ENCODE measurements at regions of chr22 and their contacts with region 1.

Region 1: DNA sequence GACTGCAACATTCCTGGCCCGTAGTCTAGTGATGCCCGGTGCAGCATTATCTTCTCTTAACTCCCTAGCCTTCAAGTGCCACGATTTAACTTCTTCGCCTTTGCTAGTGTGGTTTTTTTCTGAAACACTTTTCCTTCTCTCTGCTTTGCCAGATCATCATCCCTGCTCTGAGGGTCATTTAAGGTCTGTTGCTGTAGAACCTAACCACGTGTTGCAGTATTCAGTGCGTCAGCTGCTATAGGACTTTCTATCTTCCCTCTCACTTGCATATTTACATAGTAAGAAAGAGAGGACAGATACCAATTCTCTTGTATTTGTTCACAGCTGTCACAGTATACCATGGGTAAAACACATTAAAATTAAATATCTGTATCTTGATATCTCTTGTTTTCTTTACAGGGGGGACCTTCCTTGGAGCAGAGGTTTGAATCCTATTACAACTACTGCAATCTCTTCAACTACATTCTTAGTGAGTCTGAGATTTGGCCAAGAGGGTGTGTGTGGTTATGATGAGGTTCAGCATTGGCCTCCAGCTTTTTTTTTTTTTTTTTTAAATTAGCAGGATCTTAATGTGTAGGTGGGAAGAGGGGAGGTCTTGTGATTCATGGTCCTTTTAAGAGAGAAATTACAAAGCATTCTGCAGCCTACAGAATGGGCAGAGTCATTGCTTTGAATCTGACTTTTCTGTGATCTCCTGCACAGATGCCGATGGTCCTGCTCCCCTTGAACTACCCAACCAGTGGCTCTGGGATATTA is 13.5 kb downstream of the EIF3L start:
- DNase-seq: no peak
- ATAC-seq: no peak
- H3K4me3 ChIP-seq: no peak overlapping the region
- H3K4me3 Mint-ChIP-seq: no peak overlapping the region
- H3K27ac ChIP-seq: no peak overlapping the region
- H3K27ac Mint-ChIP-seq: no peak overlapping the region
- H3K4me1 ChIP-seq: no peaks in the 10 kb centered on the region
- H3K4me1 Mint-ChIP-seq: peaks cover 4% of the 10 kb centered on the region
- H3K27me3 ChIP-seq: no peaks in the 10 kb centered on the region
- H3K27me3 Mint-ChIP-seq: no peaks in the 10 kb centered on the region
- CTCF ChIP-seq: no peak

Region 2: DNA sequence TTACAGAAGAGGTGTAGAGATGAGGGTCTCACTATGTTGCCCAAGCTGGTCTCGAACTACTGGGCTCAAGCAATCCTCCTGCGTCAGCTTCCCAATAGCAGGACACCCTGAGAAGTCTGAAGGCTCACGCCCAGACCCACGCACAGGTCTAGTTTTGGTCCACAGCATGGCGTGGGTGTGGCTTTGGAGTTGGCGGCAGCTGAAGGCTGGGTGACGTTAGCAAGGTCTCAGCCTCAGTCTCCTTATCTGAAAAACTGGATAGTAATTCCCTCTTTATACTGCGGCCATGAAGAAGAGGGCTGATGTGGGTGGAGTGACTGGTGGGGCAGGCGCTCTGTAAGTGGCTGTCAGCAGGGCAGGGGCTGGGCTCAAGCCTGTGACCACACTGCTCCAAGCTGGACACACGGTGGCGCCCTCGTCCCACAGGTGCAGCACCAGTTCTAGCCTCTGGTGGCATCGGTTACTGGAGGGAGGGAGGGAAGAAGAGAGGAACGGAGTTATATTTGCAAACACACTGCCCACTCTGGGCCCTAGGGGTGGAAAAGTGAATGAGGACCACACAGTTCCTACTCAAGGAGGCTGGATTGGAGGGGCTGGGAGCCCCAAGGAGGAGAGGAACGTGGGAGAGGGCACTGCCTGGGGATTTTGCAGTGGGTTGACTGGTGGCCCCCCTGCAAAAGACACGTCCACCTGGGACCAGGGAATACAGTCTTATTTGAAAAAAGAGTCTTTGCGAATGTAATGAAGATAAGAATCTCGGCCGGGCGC is 324.0 kb before region 1 on chr22:
- CTCF ChIA-PET with region 1: interaction called, 5 read pairs
- POLR2A ChIA-PET with region 1: no interaction called
- intact Hi-C with region 1: loop called (anchors 5 kb)
- DNase-seq: peak; percentile 80 to 93 (median 89)
- ATAC-seq: peak; percentile 99
- H3K4me3 ChIP-seq: no peak overlapping the region
- H3K4me3 Mint-ChIP-seq: peak overlapping the region; percentile 56
- H3K27ac ChIP-seq: no peak overlapping the region
- H3K27ac Mint-ChIP-seq: no peak overlapping the region
- H3K4me1 ChIP-seq: peaks cover 16% of the 10 kb centered on the region
- H3K4me1 Mint-ChIP-seq: peaks cover 17% of the 10 kb centered on the region
- H3K27me3 ChIP-seq: peaks cover 0 to 8% of the 10 kb centered on the region in 2 experiments
- H3K27me3 Mint-ChIP-seq: peaks cover 30% of the 10 kb centered on the region
- CTCF ChIP-seq: peak; percentile 89

Region 3: GRCh38 chr22:37566903-37567820 is 295.6 kb before region 1 on chr22:
- CTCF ChIA-PET with region 1: no interaction called
- POLR2A ChIA-PET with region 1: no interaction called
- intact Hi-C with region 1: no loop called
- DNase-seq: peak; percentile 77 to 97 (median 92)
- ATAC-seq: peak; percentile 85
- H3K4me3 ChIP-seq: peak overlapping the region; percentile 9 to 10
- H3K4me3 Mint-ChIP-seq: peak overlapping the region; percentile 75
- H3K27ac ChIP-seq: no peak overlapping the region
- H3K27ac Mint-ChIP-seq: peak overlapping the region; percentile 66
- H3K4me1 ChIP-seq: peaks cover 24% of the 10 kb centered on the region
- H3K4me1 Mint-ChIP-seq: peaks cover 24% of the 10 kb centered on the region
- H3K27me3 ChIP-seq: peaks cover under 1 to 9% of the 10 kb centered on the region in 2 experiments
- H3K27me3 Mint-ChIP-seq: peaks cover 15% of the 10 kb centered on the region
- CTCF ChIP-seq: peak; percentile 93

Region 4: DNA sequence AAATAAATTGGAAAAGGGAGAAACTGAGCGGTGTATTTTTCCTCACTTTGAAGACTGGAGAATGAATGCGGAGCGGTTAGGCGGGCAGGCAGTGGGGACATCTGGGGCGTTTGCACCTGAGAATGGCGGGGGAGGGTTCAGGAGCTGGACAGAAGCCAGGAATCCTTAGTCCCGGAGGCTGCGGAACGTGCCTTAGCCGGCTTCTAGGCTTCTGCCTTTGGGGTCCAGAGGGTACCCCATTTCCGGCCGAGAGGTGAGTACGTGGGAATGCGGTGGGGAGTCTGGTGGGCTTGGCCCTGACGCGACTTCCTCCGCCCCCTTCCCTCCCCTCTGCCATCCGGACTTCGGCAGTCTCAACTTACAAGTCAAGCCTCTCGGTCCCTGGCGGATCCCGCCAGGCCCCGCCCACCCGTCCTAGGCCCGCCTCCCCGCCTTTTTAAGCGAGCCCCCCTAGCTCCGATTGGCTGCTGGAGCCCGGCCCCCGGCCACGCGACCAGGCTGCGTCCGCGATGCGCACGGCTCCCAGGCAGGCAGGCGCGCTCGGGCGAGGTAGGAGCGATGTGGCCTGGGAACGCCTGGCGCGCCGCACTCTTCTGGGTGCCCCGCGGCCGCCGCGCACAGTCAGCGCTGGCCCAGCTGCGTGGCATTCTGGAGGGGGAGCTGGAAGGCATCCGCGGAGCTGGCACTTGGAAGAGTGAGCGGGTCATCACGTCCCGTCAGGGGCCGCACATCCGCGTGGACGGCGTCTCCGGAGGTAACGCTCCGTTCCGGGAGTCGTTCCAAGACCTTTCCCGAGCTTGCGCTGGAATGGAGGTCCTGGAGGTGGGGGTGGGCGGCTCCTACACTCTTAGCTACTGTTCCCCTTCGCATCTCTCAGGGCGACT is 55.1 kb before region 1 on chr22 and contains the start of gene GCAT:
- CTCF ChIA-PET with region 1: interaction called, 16 read pairs
- POLR2A ChIA-PET with region 1: no interaction called
- intact Hi-C with region 1: no loop called
- DNase-seq: peak; percentile 63 to 92 (median 83)
- ATAC-seq: peak; percentile 91
- H3K4me3 ChIP-seq: peak within 1 kb of the TSS; percentile 51 to 55
- H3K4me3 Mint-ChIP-seq: peak within 1 kb of the TSS; percentile 75
- H3K27ac ChIP-seq: no peak within 1 kb of the TSS
- H3K27ac Mint-ChIP-seq: no peak within 1 kb of the TSS
- H3K4me1 ChIP-seq: peaks cover 37% of the 10 kb centered on the region
- H3K4me1 Mint-ChIP-seq: peaks cover 36% of the 10 kb centered on the region
- H3K27me3 ChIP-seq: peaks cover 17 to 66% of the 10 kb centered on the region in 2 experiments
- H3K27me3 Mint-ChIP-seq: peaks cover 47% of the 10 kb centered on the region
- CTCF ChIP-seq: no peak
- total RNA-seq, gene GCAT: 1.3 to 1.6 TPM

Region 5: GRCh38 chr22:37824674-37825641 is 37.8 kb before region 1 on chr22:
- CTCF ChIA-PET with region 1: interaction called, 153 read pairs
- POLR2A ChIA-PET with region 1: interaction called, 3 read pairs
- intact Hi-C with region 1: no loop called
- DNase-seq: peak in 1 of 9 experiments; percentile 37
- ATAC-seq: no peak
- H3K4me3 ChIP-seq: no peak overlapping the region
- H3K4me3 Mint-ChIP-seq: peak overlapping the region; percentile 35
- H3K27ac ChIP-seq: no peak overlapping the region
- H3K27ac Mint-ChIP-seq: no peak overlapping the region
- H3K4me1 ChIP-seq: no peaks in the 10 kb centered on the region
- H3K4me1 Mint-ChIP-seq: no peaks in the 10 kb centered on the region
- H3K27me3 ChIP-seq: peaks cover 3 to 4% of the 10 kb centered on the region in 2 experiments
- H3K27me3 Mint-ChIP-seq: peaks cover 27% of the 10 kb centered on the region
- CTCF ChIP-seq: no peak

Region 6: DNA sequence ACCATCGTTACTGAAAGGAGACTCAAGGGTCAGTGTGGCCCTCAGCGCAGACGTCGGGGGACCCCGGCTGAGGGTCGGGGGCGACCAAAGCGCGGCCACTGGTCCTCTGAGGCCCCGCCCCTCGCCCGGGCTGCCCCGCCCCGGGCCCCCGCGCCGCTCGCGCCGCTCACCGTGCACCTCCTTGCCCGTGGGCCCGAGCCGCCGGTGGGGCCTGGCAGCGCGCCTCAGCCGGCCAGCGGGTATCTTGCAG is 19.1 kb before region 1 on chr22:
- CTCF ChIA-PET with region 1: interaction called, 18 read pairs
- POLR2A ChIA-PET with region 1: interaction called, 3 read pairs
- intact Hi-C with region 1: loop called in 1 of 2 experiments (anchors 1 kb)
- DNase-seq: peak in 1 of 9 experiments; percentile 49
- ATAC-seq: peak; percentile 25
- H3K4me3 ChIP-seq: peak overlapping the region; percentile 48 to 74
- H3K4me3 Mint-ChIP-seq: peak overlapping the region; percentile 87
- H3K27ac ChIP-seq: peak overlapping the region; percentile 60 to 77
- H3K27ac Mint-ChIP-seq: peak overlapping the region; percentile 86
- H3K4me1 ChIP-seq: peaks cover 17% of the 10 kb centered on the region
- H3K4me1 Mint-ChIP-seq: peaks cover 21% of the 10 kb centered on the region
- H3K27me3 ChIP-seq: no peaks in the 10 kb centered on the region
- H3K27me3 Mint-ChIP-seq: no peaks in the 10 kb centered on the region
- CTCF ChIP-seq: no peak

Region 7: GRCh38 chr22:37880668-37881440 is 18.1 kb after region 1 on chr22:
- CTCF ChIA-PET with region 1: interaction called, 15 read pairs
- POLR2A ChIA-PET with region 1: no interaction called
- intact Hi-C with region 1: no loop called
- DNase-seq: no peak
- ATAC-seq: no peak
- H3K4me3 ChIP-seq: no peak overlapping the region
- H3K4me3 Mint-ChIP-seq: no peak overlapping the region
- H3K27ac ChIP-seq: no peak overlapping the region
- H3K27ac Mint-ChIP-seq: no peak overlapping the region
- H3K4me1 ChIP-seq: no peaks in the 10 kb centered on the region
- H3K4me1 Mint-ChIP-seq: peaks cover 20% of the 10 kb centered on the region
- H3K27me3 ChIP-seq: no peaks in the 10 kb centered on the region
- H3K27me3 Mint-ChIP-seq: no peaks in the 10 kb centered on the region
- CTCF ChIP-seq: no peak

Region 8: GRCh38 chr22:37910890-37911743 is 48.4 kb after region 1 on chr22:
- CTCF ChIA-PET with region 1: no interaction called
- POLR2A ChIA-PET with region 1: no interaction called
- intact Hi-C with region 1: no loop called
- DNase-seq: no peak
- ATAC-seq: no peak
- H3K4me3 ChIP-seq: no peak overlapping the region
- H3K4me3 Mint-ChIP-seq: no peak overlapping the region
- H3K27ac ChIP-seq: no peak overlapping the region
- H3K27ac Mint-ChIP-seq: no peak overlapping the region
- H3K4me1 ChIP-seq: peaks cover 17% of the 10 kb centered on the region
- H3K4me1 Mint-ChIP-seq: peaks cover 40% of the 10 kb centered on the region
- H3K27me3 ChIP-seq: no peaks in the 10 kb centered on the region
- H3K27me3 Mint-ChIP-seq: no peaks in the 10 kb centered on the region
- CTCF ChIP-seq: no peak

Region 9: DNA sequence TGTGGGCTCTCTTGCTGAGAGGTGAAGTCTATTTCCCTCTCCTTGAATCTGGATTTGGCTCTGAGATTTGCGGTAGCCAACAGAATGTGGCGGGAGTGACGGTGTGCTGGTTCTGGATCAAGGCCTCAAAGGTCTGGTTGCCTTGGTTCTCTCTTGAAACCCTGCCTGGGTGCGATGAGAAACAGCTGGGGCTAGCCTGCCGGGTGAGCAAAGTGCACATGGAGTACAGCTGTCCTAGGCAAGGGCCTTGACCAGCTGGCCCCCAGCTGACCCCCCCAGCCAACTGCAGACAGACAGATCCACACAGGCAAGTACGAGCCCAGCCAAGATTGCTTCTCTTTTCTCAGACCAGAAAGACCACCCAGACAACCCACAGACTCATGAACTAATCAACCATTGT is 882.2 kb after region 1 on chr22:
- CTCF ChIA-PET with region 1: no interaction called
- POLR2A ChIA-PET with region 1: no interaction called
- intact Hi-C with region 1: no loop called
- DNase-seq: no peak
- ATAC-seq: no peak
- H3K4me3 ChIP-seq: no peak overlapping the region
- H3K4me3 Mint-ChIP-seq: no peak overlapping the region
- H3K27ac ChIP-seq: peak overlapping the region in 1 of 2 experiments; percentile 50
- H3K27ac Mint-ChIP-seq: peak overlapping the region; percentile 68
- H3K4me1 ChIP-seq: peaks cover 73% of the 10 kb centered on the region
- H3K4me1 Mint-ChIP-seq: peaks cover 57% of the 10 kb centered on the region
- H3K27me3 ChIP-seq: no peaks in the 10 kb centered on the region
- H3K27me3 Mint-ChIP-seq: no peaks in the 10 kb centered on the region
- CTCF ChIP-seq: no peak